ENCODE measurements at regions of chr6 and their contacts with region 1.

Region 1: GRCh38 chr6:137707590-137708360 is 159.3 kb upstream of the TNFAIP3 start:
- DNase-seq: peak; percentile 45
- H3K4me3 ChIP-seq: peak overlapping the region; percentile 19 to 52; a peak in 3 of 4 replicates
- H3K27ac ChIP-seq: no peak overlapping the region
- H3K4me1 ChIP-seq: peaks cover 0 to 3% of the 10 kb centered on the region in 2 experiments; a peak in 2 of 4 replicates
- H3K27me3 ChIP-seq: no peaks in the 10 kb centered on the region; the same call in 1 of the 2 replicates
- CTCF ChIP-seq: peak; percentile 76
- EP300 ChIP-seq: no peak
- RAD21 ChIP-seq: peak; percentile 74

Region 2: GRCh38 chr6:137610702-137611101 is 97.1 kb before region 1 on chr6:
- CTCF ChIA-PET with region 1: no interaction called
- POLR2A ChIA-PET with region 1: no interaction called
- DNase-seq: no peak
- H3K4me3 ChIP-seq: no peak overlapping the region
- H3K27ac ChIP-seq: no peak overlapping the region
- H3K4me1 ChIP-seq: no peaks in the 10 kb centered on the region
- H3K27me3 ChIP-seq: no peaks in the 10 kb centered on the region
- CTCF ChIP-seq: no peak
- EP300 ChIP-seq: no peak
- RAD21 ChIP-seq: no peak

Region 3: GRCh38 chr6:137697267-137697938 is 10.4 kb before region 1 on chr6:
- CTCF ChIA-PET with region 1: interaction called, 16 read pairs
- POLR2A ChIA-PET with region 1: no interaction called
- DNase-seq: no peak
- H3K4me3 ChIP-seq: no peak overlapping the region
- H3K27ac ChIP-seq: no peak overlapping the region
- H3K4me1 ChIP-seq: no peaks in the 10 kb centered on the region
- H3K27me3 ChIP-seq: no peaks in the 10 kb centered on the region; the same call in 1 of the 2 replicates
- CTCF ChIP-seq: no peak
- EP300 ChIP-seq: no peak
- RAD21 ChIP-seq: no peak

Region 4: DNA sequence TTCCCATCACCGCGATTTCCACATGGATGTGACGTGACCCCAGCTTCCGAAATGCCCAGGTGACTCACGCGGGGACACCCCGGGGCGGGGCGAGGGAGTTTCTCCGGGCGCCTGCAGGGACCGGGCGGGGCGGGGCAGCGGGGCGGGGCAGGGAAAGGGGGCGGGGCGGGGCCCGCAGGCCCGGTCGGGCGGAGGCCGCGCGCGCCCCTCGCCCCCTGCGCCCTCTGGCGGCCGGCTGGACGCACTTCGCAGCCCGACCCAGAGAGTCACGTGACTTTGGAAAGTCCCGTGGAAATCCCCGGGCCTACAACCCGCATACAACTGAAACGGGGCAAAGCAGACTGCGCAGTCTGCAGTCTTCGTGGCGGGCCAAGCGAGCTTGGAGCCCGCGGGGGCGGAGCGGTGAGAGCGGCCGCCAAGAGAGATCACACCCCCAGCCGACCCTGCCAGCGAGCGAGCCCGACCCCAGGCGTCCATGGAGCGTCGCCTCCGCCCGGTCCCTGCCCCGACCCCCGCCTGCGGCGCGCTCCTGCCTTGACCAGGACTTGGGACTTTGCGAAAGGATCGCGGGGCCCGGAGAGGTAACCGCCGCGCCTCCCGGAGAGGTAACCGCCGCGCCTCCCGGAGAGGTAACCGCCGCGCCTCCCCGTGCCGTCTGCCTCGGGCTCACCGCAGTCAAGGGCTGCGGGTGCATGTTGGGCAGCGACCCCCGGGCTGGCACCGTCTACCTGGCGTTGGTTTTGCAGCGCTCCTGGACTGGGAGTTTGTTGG is 159.3 kb after region 1 on chr6 and contains the start of gene TNFAIP3:
- CTCF ChIA-PET with region 1: interaction called, 17 read pairs
- POLR2A ChIA-PET with region 1: no interaction called
- DNase-seq: peak; percentile 97
- H3K4me3 ChIP-seq: peak within 1 kb of the TSS; percentile 57 to 69
- H3K27ac ChIP-seq: no peak within 1 kb of the TSS
- H3K4me1 ChIP-seq: peaks cover 0 to 8% of the 10 kb centered on the region in 2 experiments; a peak in 1 of 4 replicates
- H3K27me3 ChIP-seq: no peaks in the 10 kb centered on the region; the same call in 1 of the 2 replicates
- CTCF ChIP-seq: peak; percentile 56
- EP300 ChIP-seq: no peak
- RAD21 ChIP-seq: peak; percentile 27; the same call in 1 of the 2 replicates
- polyA plus RNA-seq, gene TNFAIP3: 1.0 and 1.1 TPM in 2 replicates

Region 5: DNA sequence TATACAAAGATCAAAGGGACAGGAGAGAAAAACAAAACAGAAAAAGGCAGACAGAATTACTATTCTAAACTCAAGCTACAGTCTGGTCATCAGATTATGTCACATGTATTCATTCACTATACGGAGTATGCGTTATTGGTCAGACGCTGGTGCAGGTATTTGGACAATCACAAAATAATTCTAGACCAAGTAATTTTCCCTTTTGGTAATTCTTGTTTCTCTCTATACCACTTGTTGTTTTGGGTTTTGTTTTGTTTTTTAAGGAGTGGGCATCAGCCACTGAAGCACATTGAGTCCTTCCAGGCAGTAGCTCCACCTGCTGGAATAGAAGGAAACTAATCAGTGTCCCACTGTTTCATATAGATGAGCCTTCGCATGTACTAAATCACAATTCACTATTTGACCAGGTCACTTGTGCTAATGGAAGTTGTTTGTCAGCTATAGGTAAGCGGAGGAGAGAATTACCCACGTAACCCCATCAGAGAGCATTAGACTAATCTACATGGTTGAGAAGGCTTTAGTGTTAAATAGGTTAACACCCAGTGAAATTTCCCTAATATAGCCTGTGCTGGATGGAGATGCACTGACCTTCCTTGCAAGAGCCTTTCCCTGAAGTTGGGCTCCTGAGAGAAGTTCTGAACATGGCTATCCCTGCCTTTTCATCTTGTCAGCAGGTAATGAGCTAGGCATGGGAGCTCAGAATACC is 237.2 kb after region 1 on chr6:
- CTCF ChIA-PET with region 1: interaction called, 10 read pairs
- POLR2A ChIA-PET with region 1: no interaction called
- DNase-seq: peak; percentile 7
- H3K4me3 ChIP-seq: no peak overlapping the region; a peak in 1 of 4 replicates
- H3K27ac ChIP-seq: no peak overlapping the region
- H3K4me1 ChIP-seq: no peaks in the 10 kb centered on the region
- H3K27me3 ChIP-seq: no peaks in the 10 kb centered on the region; the same call in 1 of the 2 replicates
- CTCF ChIP-seq: peak; percentile 66
- EP300 ChIP-seq: no peak
- RAD21 ChIP-seq: peak; percentile 47

Measured in SK-N-SH (cell line).